CD8-positive, alpha-beta T cell (primary cell): ENCODE measurements at regions of chr3 and their contacts with region 1.

Region 1: DNA sequence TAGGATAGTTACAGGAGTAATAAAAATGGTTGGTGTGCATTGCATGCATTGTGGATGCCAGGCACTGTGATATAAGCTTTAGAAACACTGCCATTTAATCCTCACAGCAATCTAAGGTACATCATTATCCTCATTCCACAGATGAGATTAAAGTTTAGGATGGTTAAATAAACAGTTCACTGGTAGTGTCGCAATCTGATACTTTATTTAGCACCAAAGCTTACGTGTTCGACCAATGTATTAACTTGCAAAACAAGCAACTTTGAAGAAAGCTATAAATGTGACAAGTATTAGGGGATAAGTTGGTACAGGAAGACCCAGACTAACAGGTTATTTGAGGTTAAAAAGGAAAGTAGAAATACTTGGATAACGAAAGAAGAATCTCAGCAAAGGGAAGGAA is 150.5 kb upstream of the ZNF385D start:
- DNase-seq: no peak
- ATAC-seq: no peak
- H3K4me3 ChIP-seq: no peak overlapping the region
- H3K4me3 Mint-ChIP-seq: no peak overlapping the region
- H3K27ac ChIP-seq: no peak overlapping the region
- H3K27ac Mint-ChIP-seq: no peak overlapping the region
- H3K4me1 ChIP-seq: no peaks in the 10 kb centered on the region
- H3K4me1 Mint-ChIP-seq: no peaks in the 10 kb centered on the region
- H3K27me3 ChIP-seq: no peaks in the 10 kb centered on the region
- H3K27me3 Mint-ChIP-seq: no peaks in the 10 kb centered on the region
- CTCF ChIP-seq: no peak

Region 2: DNA sequence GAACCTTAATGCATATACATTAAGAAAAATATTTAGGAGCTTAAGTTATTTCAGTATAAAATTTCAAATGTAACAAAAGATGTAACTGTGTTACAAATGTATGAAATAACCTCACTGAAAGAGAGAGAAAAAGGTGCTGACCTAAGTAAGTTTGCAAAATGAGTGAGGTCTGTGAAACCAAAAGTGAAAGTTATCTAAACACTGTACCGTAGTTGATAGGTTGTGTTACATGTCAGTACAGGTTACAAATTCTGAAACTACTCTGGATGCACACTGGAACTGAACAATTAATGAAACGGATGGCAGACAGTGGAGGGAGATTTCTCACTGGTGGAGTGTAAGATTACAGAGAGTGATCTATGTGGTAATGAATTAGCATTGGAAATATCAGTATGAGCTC is 571.2 kb before region 1 on chr3:
- CTCF ChIA-PET with region 1: no interaction called
- POLR2A ChIA-PET with region 1: no interaction called
- intact Hi-C with region 1: loop called in 1 of 2 experiments (anchors 5 kb)
- DNase-seq: no peak
- ATAC-seq: no peak
- H3K4me3 ChIP-seq: no peak overlapping the region
- H3K4me3 Mint-ChIP-seq: peak overlapping the region; percentile 15
- H3K27ac ChIP-seq: no peak overlapping the region
- H3K27ac Mint-ChIP-seq: no peak overlapping the region
- H3K4me1 ChIP-seq: no peaks in the 10 kb centered on the region
- H3K4me1 Mint-ChIP-seq: peaks cover 2% of the 10 kb centered on the region
- H3K27me3 ChIP-seq: no peaks in the 10 kb centered on the region
- H3K27me3 Mint-ChIP-seq: no peaks in the 10 kb centered on the region
- CTCF ChIP-seq: no peak

Region 3: GRCh38 chr3:21888656-21889055 is 12.8 kb before region 1 on chr3:
- CTCF ChIA-PET with region 1: no interaction called
- POLR2A ChIA-PET with region 1: no interaction called
- intact Hi-C with region 1: no loop called
- DNase-seq: no peak
- ATAC-seq: no peak
- H3K4me3 ChIP-seq: no peak overlapping the region
- H3K4me3 Mint-ChIP-seq: no peak overlapping the region
- H3K27ac ChIP-seq: no peak overlapping the region
- H3K27ac Mint-ChIP-seq: no peak overlapping the region
- H3K4me1 ChIP-seq: no peaks in the 10 kb centered on the region
- H3K4me1 Mint-ChIP-seq: no peaks in the 10 kb centered on the region
- H3K27me3 ChIP-seq: no peaks in the 10 kb centered on the region
- H3K27me3 Mint-ChIP-seq: no peaks in the 10 kb centered on the region
- CTCF ChIP-seq: no peak